ENCODE measurements at regions of chr15 and their contacts with region 1.

Region 1: DNA sequence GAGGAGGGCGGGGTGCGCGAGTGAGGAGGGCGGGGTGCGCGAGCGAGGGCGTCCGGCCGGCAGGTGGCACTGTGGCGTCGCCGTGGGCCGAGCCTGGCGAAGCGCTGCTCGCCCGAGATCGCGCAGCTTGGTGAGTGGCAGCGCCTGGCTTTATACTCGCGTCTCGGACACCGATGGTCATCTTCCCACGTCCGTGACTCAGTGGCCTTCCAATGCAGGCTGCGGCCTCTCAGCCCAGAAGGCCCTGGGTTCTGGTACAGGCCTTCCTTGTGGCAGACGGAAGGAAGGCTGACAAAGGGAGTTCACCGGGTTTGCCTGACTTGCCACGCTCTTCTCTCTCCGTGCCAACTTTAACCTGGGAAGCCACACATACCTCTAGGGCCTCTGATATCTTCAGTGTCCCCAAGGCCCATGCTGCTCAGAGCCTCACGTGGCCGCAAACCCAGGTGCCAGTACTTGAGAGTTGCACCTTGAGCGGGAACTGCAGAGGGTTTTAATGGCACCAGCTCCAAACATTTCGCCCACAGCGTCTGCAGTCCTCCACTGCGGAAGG is 195.3 kb upstream of the LYSMD4 start:
- DNase-seq: peak; percentile 79 to 95 (median 89)
- ATAC-seq: peak; percentile 92
- H3K4me3 ChIP-seq: peak overlapping the region; percentile 63 to 64
- H3K4me3 Mint-ChIP-seq: peak overlapping the region; percentile 83
- H3K27ac ChIP-seq: peak overlapping the region; percentile 34 to 72
- H3K27ac Mint-ChIP-seq: peak overlapping the region; percentile 87
- H3K4me1 ChIP-seq: peaks cover 18% of the 10 kb centered on the region
- H3K4me1 Mint-ChIP-seq: peaks cover 20% of the 10 kb centered on the region
- H3K27me3 ChIP-seq: no peaks in the 10 kb centered on the region
- H3K27me3 Mint-ChIP-seq: peaks cover 3% of the 10 kb centered on the region
- CTCF ChIP-seq: peak; percentile 59

Region 2: GRCh38 chr15:98647774-98648653 is 1280.5 kb before region 1 on chr15 and contains the start of gene IGF1R:
- CTCF ChIA-PET with region 1: no interaction called
- POLR2A ChIA-PET with region 1: no interaction called
- intact Hi-C with region 1: loop called (anchors 5 kb)
- DNase-seq: peak; percentile 75 to 94 (median 85)
- ATAC-seq: peak; percentile 74
- H3K4me3 ChIP-seq: peak within 1 kb of the TSS; percentile 74 to 88
- H3K4me3 Mint-ChIP-seq: peak within 1 kb of the TSS; percentile 89
- H3K27ac ChIP-seq: peak within 1 kb of the TSS in 1 of 2 experiments; percentile 88
- H3K27ac Mint-ChIP-seq: peak within 1 kb of the TSS; percentile 95
- H3K4me1 ChIP-seq: peaks cover 9% of the 10 kb centered on the region
- H3K4me1 Mint-ChIP-seq: peaks cover 28% of the 10 kb centered on the region
- H3K27me3 ChIP-seq: peaks cover 0 to 10% of the 10 kb centered on the region in 2 experiments
- H3K27me3 Mint-ChIP-seq: peaks cover 15% of the 10 kb centered on the region
- CTCF ChIP-seq: no peak
- total RNA-seq, gene IGF1R: 30.1 to 33.8 TPM

Region 3: DNA sequence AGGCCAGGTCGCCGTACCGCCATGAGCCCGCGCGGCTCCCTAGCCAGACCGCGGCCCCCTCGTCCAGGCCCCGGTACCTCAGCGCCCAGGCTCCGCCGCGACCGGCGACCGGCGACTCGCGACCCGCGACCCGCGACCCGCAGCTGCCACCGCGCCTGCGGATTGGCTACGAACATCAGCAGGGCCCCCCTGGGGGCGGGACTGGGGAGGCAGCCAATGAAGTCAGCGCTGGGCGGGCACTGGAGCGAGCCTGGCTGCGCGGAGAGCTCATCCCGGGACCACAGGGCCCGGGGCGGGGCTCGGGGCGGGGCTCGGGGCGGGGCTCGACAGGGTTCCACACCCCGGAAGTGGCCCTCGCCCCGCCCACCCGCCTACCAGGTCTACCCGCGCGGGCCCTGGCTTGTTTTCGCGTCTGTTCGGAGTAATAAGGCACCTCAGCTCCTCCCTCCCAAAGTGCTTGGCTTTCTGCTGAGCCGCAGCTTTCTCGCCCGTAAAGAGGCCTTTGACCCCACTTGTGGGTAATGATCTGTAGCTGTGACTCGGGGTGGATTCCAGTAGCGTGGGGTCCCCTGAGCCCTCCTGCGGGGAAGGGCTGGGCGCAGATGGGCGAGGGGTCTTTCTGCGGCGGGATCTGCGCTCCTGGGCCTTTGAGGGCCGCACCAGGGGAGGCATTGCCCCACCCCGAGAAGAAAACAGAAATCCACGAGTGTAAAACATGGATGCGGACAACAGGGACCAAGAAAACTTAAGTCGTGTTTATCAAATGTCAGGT is 195.1 kb before region 1 on chr15 and contains the start of gene LYSMD4:
- CTCF ChIA-PET with region 1: no interaction called
- POLR2A ChIA-PET with region 1: no interaction called
- intact Hi-C with region 1: loop called (anchors 2 to 5 kb)
- DNase-seq: peak; percentile 97 to 99 (median 98)
- ATAC-seq: peak; percentile 99
- H3K4me3 ChIP-seq: peak within 1 kb of the TSS; percentile 69 to 80
- H3K4me3 Mint-ChIP-seq: peak within 1 kb of the TSS; percentile 89
- H3K27ac ChIP-seq: peak within 1 kb of the TSS; percentile 62 to 87
- H3K27ac Mint-ChIP-seq: peak within 1 kb of the TSS; percentile 95
- H3K4me1 ChIP-seq: peaks cover 13% of the 10 kb centered on the region
- H3K4me1 Mint-ChIP-seq: peaks cover 19% of the 10 kb centered on the region
- H3K27me3 ChIP-seq: no peaks in the 10 kb centered on the region
- H3K27me3 Mint-ChIP-seq: no peaks in the 10 kb centered on the region
- CTCF ChIP-seq: no peak
- total RNA-seq, gene LYSMD4: 7.6 to 7.7 TPM

Region 4: DNA sequence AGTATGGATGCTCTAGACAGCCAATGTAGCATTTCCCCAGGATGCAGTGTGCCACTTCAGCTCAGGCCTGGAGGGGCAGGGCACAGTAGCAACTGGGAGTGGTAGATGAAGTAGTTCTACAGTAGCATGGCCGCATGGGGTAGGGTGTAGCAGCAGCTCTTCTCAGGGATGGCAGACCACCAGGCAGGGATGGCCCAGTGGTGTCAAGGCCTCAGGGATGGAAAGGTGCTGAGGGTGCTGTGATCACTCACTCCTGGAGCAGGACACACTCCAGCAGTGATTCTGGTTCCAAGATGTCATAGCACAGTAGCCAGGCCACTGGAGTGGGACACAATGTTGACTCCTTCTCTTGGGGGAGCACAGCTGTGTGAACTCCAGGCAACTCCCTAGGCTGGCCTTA is 15.6 kb after region 1 on chr15:
- CTCF ChIA-PET with region 1: no interaction called
- POLR2A ChIA-PET with region 1: no interaction called
- intact Hi-C with region 1: no loop called
- DNase-seq: no peak
- ATAC-seq: no peak
- H3K4me3 ChIP-seq: no peak overlapping the region
- H3K4me3 Mint-ChIP-seq: no peak overlapping the region
- H3K27ac ChIP-seq: no peak overlapping the region
- H3K27ac Mint-ChIP-seq: no peak overlapping the region
- H3K4me1 ChIP-seq: no peaks in the 10 kb centered on the region
- H3K4me1 Mint-ChIP-seq: no peaks in the 10 kb centered on the region
- H3K27me3 ChIP-seq: peaks cover 0 to 3% of the 10 kb centered on the region in 2 experiments
- H3K27me3 Mint-ChIP-seq: peaks cover 4% of the 10 kb centered on the region
- CTCF ChIP-seq: no peak

Region 5: GRCh38 chr15:100349696-100350433 is 421.4 kb after region 1 on chr15:
- CTCF ChIA-PET with region 1: interaction called, 86 read pairs
- POLR2A ChIA-PET with region 1: interaction called, 4 read pairs
- intact Hi-C with region 1: no loop called
- DNase-seq: peak; percentile 65 to 91 (median 85)
- ATAC-seq: peak; percentile 92
- H3K4me3 ChIP-seq: peak overlapping the region; percentile 88 to 99
- H3K4me3 Mint-ChIP-seq: peak overlapping the region; percentile 94
- H3K27ac ChIP-seq: peak overlapping the region; percentile 54 to 80
- H3K27ac Mint-ChIP-seq: peak overlapping the region; percentile 87
- H3K4me1 ChIP-seq: peaks cover 9% of the 10 kb centered on the region
- H3K4me1 Mint-ChIP-seq: peaks cover 9% of the 10 kb centered on the region
- H3K27me3 ChIP-seq: no peaks in the 10 kb centered on the region
- H3K27me3 Mint-ChIP-seq: peaks cover 20% of the 10 kb centered on the region
- CTCF ChIP-seq: peak; percentile 78

Region 6: DNA sequence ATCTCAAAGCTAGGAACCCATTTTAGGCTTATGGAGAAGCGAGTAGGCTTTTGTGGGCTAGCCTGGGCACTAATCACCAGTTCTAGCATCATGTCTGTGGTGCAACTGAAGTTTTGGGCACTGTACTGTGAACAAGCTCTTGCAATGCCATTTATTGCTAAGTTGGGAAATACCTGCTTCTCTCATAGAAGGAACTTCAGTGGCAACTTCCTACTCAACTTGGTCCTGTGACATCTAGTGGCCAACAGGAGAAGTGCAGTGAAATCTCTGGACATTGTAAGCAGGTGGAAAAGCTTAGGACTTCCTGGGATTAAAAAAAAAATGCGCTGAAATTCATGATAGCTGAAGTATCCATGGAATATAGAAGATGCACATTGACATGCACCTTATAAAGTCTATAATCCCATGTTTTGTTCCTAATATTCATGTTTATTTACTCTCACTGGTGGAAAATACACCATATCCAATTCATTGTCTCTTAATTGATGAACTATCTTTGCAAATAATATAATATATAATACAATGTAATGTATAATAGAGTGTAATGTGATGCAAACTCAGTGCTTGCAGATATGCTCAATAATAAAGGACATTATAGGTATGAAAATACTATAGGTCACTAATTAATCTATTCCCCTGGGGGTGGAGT is 944.6 kb after region 1 on chr15:
- CTCF ChIA-PET with region 1: no interaction called
- POLR2A ChIA-PET with region 1: no interaction called
- intact Hi-C with region 1: loop called in 1 of 2 experiments (anchors 5 kb)
- DNase-seq: peak in 7 of 9 experiments; percentile 25 to 74 (median 51)
- ATAC-seq: peak; percentile 70
- H3K4me3 ChIP-seq: no peak overlapping the region
- H3K4me3 Mint-ChIP-seq: no peak overlapping the region
- H3K27ac ChIP-seq: no peak overlapping the region
- H3K27ac Mint-ChIP-seq: no peak overlapping the region
- H3K4me1 ChIP-seq: no peaks in the 10 kb centered on the region
- H3K4me1 Mint-ChIP-seq: no peaks in the 10 kb centered on the region
- H3K27me3 ChIP-seq: no peaks in the 10 kb centered on the region
- H3K27me3 Mint-ChIP-seq: peaks cover 27% of the 10 kb centered on the region
- CTCF ChIP-seq: peak; percentile 73

Region 7: DNA sequence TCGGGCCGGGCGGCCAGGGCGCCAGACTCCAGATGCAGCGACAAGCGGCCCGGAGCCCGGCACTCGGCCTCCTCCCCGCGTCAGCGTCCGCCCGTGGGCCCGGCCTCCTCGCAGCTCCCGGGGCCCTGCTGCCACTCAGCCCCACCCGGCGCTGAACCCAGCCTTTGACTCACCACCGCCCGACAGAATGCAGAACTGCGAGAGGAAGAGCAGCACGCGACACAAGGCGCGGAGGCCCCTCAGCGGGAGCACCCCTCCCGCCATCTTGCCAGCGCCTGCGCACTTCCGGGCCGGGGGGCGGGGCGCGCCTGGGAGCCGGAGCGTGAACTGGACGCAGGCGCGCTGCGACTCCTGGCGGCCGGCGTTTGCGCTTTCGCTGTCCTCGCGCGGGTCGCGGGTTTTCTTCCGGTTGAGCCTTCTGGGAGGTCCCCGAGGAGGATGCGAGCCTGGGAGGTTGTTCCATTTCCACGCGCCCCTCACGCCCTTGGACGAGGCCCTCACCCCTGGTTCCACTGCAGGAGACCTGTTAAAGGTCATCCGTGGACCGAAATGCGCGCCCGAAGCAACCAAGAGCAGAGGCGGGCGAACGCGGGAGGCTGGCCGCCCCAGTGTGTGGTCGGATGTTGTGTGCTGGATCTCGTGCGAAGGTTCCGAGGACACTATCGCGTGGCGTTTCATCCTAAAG is 1723.7 kb after region 1 on chr15 and contains the start of gene TM2D3:
- CTCF ChIA-PET with region 1: no interaction called
- POLR2A ChIA-PET with region 1: no interaction called
- intact Hi-C with region 1: loop called in 1 of 2 experiments (anchors 10 kb)
- DNase-seq: peak; percentile 89 to 98 (median 95)
- ATAC-seq: peak; percentile 92
- H3K4me3 ChIP-seq: peak within 1 kb of the TSS; percentile 91 to 99
- H3K4me3 Mint-ChIP-seq: peak within 1 kb of the TSS; percentile 90
- H3K27ac ChIP-seq: peak within 1 kb of the TSS; percentile 97
- H3K27ac Mint-ChIP-seq: peak within 1 kb of the TSS; percentile 96
- H3K4me1 ChIP-seq: peaks cover 26% of the 10 kb centered on the region
- H3K4me1 Mint-ChIP-seq: peaks cover 39% of the 10 kb centered on the region
- H3K27me3 ChIP-seq: no peaks in the 10 kb centered on the region
- H3K27me3 Mint-ChIP-seq: no peaks in the 10 kb centered on the region
- CTCF ChIP-seq: peak; percentile 76
- total RNA-seq, gene TM2D3: 76.1 to 76.7 TPM

Measured in CD8-positive, alpha-beta T cell (primary cell).